ENCODE measurements at regions of chr7 and their contacts with region 1.

Region 1: GRCh38 chr7:17706734-17707133 is 233.6 kb downstream of the SNX13 start:
- DNase-seq: peak; percentile 83
- H3K4me3 Mint-ChIP-seq: no peak overlapping the region
- H3K27ac Mint-ChIP-seq: peak overlapping the region; percentile 55
- H3K4me1 Mint-ChIP-seq: peaks cover 7% of the 10 kb centered on the region
- H3K27me3 Mint-ChIP-seq: no peaks in the 10 kb centered on the region
- CTCF ChIP-seq: peak; percentile 67

Region 2: GRCh38 chr7:17680943-17681351 is 25.8 kb before region 1 on chr7:
- CTCF ChIA-PET with region 1: interaction called, 5 read pairs
- POLR2A ChIA-PET with region 1: no interaction called
- intact Hi-C with region 1: loop called (anchors 1 kb)
- DNase-seq: peak; percentile 41
- H3K4me3 Mint-ChIP-seq: peak overlapping the region; percentile 37
- H3K27ac Mint-ChIP-seq: peak overlapping the region; percentile 95
- H3K4me1 Mint-ChIP-seq: peaks cover 69% of the 10 kb centered on the region
- H3K27me3 Mint-ChIP-seq: no peaks in the 10 kb centered on the region
- CTCF ChIP-seq: peak; percentile 35

Region 3: GRCh38 chr7:17940302-17940883 is 233.7 kb after region 1 on chr7 and contains the start of gene SNX13:
- CTCF ChIA-PET with region 1: interaction called, 5 read pairs
- POLR2A ChIA-PET with region 1: interaction called, 6 read pairs
- intact Hi-C with region 1: loop called (anchors 10 kb)
- DNase-seq: peak; percentile 90
- H3K4me3 Mint-ChIP-seq: peak within 1 kb of the TSS; percentile 100
- H3K27ac Mint-ChIP-seq: peak within 1 kb of the TSS; percentile 99
- H3K4me1 Mint-ChIP-seq: peaks cover 29% of the 10 kb centered on the region
- H3K27me3 Mint-ChIP-seq: no peaks in the 10 kb centered on the region
- CTCF ChIP-seq: peak; percentile 19
- total RNA-seq, gene SNX13: 38.5 and 42.0 TPM in 2 replicates

Region 4: GRCh38 chr7:18119985-18120384 is 413.3 kb after region 1 on chr7:
- CTCF ChIA-PET with region 1: interaction called, 3 read pairs
- POLR2A ChIA-PET with region 1: no interaction called
- intact Hi-C with region 1: loop called (anchors 1 kb)
- DNase-seq: peak; percentile 35
- H3K4me3 Mint-ChIP-seq: no peak overlapping the region
- H3K27ac Mint-ChIP-seq: no peak overlapping the region
- H3K4me1 Mint-ChIP-seq: no peaks in the 10 kb centered on the region
- H3K27me3 Mint-ChIP-seq: no peaks in the 10 kb centered on the region
- CTCF ChIP-seq: no peak

Region 5: DNA sequence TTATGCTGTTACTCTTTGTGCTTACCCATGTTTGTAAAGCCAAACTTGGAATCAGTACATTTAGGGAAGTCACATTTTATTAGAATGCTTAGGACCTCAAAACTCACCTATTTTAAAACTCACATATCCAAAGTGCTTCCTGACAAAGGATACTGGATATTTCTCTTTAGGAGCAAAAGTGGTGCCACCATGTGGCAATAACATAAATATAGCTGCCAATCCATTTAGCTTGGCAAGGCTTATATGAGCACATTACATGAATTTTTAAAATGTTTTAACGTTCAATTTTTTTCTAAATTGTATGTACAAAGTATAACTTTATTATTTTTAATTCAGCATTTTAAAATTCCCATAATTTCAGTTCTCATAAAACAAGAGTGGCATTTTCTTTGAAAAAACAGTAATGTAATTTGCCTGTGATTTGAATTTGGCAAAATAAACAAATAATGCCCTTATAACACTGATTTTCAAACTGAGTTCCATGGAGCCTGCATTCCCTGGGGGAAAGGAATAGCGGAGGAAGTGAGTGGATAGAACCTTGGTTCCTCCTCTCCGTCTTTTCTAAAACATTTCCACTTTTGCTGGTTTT is 864.2 kb after region 1 on chr7:
- CTCF ChIA-PET with region 1: interaction called, 3 read pairs
- POLR2A ChIA-PET with region 1: no interaction called
- intact Hi-C with region 1: loop called (anchors 10 kb)
- DNase-seq: peak; percentile 63
- H3K4me3 Mint-ChIP-seq: no peak overlapping the region
- H3K27ac Mint-ChIP-seq: no peak overlapping the region
- H3K4me1 Mint-ChIP-seq: no peaks in the 10 kb centered on the region
- H3K27me3 Mint-ChIP-seq: no peaks in the 10 kb centered on the region
- CTCF ChIP-seq: peak; percentile 56

Measured in MCF 10A (cell line).